Activated naive CD4-positive, alpha-beta T cell treated with anti-CD3 and anti-CD28 coated beads for 36 hours (primary cell): ENCODE measurements at regions of chr22 and their contacts with region 1.

Region 1: GRCh38 chr22:41873391-41873790 is 40.5 kb downstream of the SREBF2 start:
- DNase-seq: peak; percentile 78
- H3K4me3 Mint-ChIP-seq: peak overlapping the region; percentile 62
- H3K27ac Mint-ChIP-seq: peak overlapping the region; percentile 95
- H3K4me1 Mint-ChIP-seq: peaks cover 75% of the 10 kb centered on the region
- H3K27me3 Mint-ChIP-seq: no peaks in the 10 kb centered on the region

Region 2: GRCh38 chr22:41822317-41823060 is 50.9 kb before region 1 on chr22:
- CTCF ChIA-PET with region 1: interaction called, 3 read pairs
- intact Hi-C with region 1: loop called (anchors 1 kb)
- DNase-seq: peak; percentile 65
- H3K4me3 Mint-ChIP-seq: no peak overlapping the region
- H3K27ac Mint-ChIP-seq: peak overlapping the region; percentile 81
- H3K4me1 Mint-ChIP-seq: peaks cover 33% of the 10 kb centered on the region
- H3K27me3 Mint-ChIP-seq: no peaks in the 10 kb centered on the region

Region 3: GRCh38 chr22:41832553-41833368 is 40.6 kb before region 1 on chr22 and contains the start of gene SREBF2:
- CTCF ChIA-PET with region 1: no interaction called
- intact Hi-C with region 1: loop called (anchors 1 kb)
- DNase-seq: peak; percentile 100
- H3K4me3 Mint-ChIP-seq: peak within 1 kb of the TSS; percentile 98
- H3K27ac Mint-ChIP-seq: peak within 1 kb of the TSS; percentile 100
- H3K4me1 Mint-ChIP-seq: peaks cover 42% of the 10 kb centered on the region
- H3K27me3 Mint-ChIP-seq: no peaks in the 10 kb centered on the region
- total RNA-seq, gene SREBF2: 143 to 147 TPM

Region 4: GRCh38 chr22:41841085-41841659 is 32.2 kb before region 1 on chr22:
- CTCF ChIA-PET with region 1: interaction called, 7 read pairs
- intact Hi-C with region 1: loop called (anchors 1 kb)
- DNase-seq: no peak
- H3K4me3 Mint-ChIP-seq: no peak overlapping the region
- H3K27ac Mint-ChIP-seq: peak overlapping the region; percentile 57
- H3K4me1 Mint-ChIP-seq: peaks cover 82% of the 10 kb centered on the region
- H3K27me3 Mint-ChIP-seq: no peaks in the 10 kb centered on the region

Region 5: DNA sequence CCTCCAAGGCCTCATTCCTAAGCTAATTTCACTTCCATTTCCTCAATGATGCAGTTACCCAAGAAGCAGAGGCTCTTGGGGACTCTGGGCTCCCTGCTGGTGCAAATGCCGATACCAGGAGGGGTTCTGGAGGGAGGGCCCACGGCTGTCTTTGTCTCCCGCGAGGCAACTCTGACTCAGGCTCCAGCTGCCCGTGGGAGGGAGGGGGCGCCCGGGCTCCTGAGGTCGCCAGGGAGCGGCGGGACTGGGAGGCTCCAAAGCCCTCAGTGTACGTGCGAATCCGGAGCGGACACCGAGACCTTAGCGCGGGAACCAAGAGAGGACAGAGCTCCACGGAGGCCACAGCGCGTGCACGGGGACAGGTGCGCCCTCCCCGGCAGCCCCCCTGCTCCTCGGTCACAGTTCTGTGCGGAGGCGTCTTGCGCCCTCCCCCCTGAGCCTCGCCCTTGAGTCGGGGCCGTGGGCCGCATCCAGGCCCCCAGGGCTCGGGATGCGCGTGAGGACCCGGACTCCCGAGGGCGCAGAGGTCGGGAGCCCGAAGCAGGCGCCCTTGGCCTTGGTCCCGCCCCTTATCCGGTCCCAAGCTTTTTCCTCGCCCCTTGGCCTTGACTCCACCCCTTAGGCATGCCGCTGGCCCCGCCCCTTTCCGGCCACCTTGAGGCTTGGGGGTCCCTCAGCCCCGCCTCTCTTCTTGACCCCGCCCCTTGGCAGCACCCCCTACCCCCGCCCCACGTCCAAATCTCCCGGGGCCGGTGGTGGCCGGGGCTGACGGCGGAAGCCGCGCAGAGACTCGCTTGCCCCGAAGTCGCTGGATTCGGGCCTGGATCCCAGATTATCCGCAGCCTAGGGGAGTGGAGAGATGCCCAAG is 46.2 kb after region 1 on chr22:
- CTCF ChIA-PET with region 1: interaction called, 3 read pairs
- intact Hi-C with region 1: loop called (anchors 2 kb)
- DNase-seq: peak; percentile 62
- H3K4me3 Mint-ChIP-seq: peak overlapping the region; percentile 56
- H3K27ac Mint-ChIP-seq: no peak overlapping the region
- H3K4me1 Mint-ChIP-seq: peaks cover 17% of the 10 kb centered on the region
- H3K27me3 Mint-ChIP-seq: peaks cover 21% of the 10 kb centered on the region